Activated naive CD4-positive, alpha-beta T cell treated with anti-CD3 and anti-CD28 coated beads, Interleukin-2, amount 10 ng/mL, durations not matched to agents 7 days and 5 days (primary cell): ENCODE measurements at regions of chr18 and their contacts with region 1.

Region 1: DNA sequence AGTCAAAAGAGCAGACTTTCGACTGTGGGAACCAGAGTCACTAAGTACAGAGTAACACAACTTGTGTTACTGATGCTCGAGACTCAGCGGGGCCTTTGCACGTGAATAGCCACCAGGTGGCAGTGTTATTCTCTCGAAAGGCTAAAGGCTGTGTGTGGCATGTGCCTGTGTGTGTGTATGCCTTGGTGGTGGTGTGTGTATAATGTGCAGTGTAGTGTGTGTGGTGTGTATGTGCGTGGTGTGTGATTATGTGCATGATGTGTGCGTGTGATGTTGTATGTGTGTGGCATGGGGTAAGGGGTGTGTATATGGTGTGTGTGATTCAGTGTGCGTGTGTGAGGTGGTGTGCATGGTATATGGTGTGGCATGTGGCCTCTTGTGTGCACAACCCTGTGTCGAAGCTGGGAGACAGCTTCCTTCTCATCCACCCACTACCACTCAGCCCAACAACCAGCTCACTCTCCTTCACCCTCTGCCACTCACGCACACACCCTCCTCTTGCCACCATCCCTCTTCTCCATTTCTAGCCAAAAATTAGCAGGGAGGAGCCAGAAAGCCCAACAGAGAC is 83.0 kb upstream of the ZNF532 start:
- DNase-seq: peak; percentile 79
- H3K4me3 Mint-ChIP-seq: no peak overlapping the region
- H3K27ac Mint-ChIP-seq: no peak overlapping the region
- H3K4me1 Mint-ChIP-seq: no peaks in the 10 kb centered on the region
- H3K27me3 Mint-ChIP-seq: peaks cover 61% of the 10 kb centered on the region

Region 2: GRCh38 chr18:58624011-58624410 is 157.7 kb before region 1 on chr18:
- CTCF ChIA-PET with region 1: no interaction called
- DNase-seq: no peak
- H3K4me3 Mint-ChIP-seq: no peak overlapping the region
- H3K27ac Mint-ChIP-seq: no peak overlapping the region
- H3K4me1 Mint-ChIP-seq: peaks cover 8% of the 10 kb centered on the region
- H3K27me3 Mint-ChIP-seq: peaks cover 20% of the 10 kb centered on the region

Region 3: DNA sequence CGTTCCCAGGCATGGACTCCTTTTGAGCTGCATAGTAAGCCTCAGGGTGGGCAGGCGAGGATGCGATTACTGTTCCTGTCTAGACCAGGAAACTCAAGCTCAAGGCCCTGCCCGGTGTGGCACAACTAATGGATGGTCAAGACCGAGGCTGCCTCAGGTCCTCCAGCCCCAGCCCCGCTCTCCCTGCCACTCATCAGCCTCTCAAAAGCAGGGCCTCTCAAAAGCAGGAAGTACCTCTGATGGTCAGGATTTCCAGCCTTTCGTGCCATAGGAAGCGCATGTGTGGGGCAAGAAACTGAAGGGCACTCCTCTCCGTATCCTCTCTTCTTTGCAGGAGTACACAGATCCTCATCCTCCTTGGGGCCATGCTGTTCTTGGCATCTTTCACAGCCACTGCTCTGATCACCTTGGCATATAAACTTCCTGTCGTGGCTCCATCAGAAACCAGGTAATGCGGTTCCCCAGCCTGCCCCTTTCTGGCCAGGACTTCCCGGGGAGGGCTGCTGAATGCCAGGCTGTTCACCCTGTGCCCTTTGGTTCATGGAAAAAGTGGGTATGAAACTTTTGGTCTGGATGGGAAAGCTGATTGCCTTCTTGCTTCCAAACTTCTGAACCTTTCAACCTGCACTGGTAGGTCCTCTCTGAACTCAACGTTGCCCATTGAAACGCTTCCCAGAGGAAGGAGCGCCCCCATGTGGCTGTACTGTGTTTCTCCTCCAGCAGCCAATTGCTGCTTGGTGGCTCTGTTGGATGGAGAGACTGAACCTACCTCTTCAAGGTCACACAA is 275.2 kb after region 1 on chr18:
- CTCF ChIA-PET with region 1: interaction called, 31 read pairs
- DNase-seq: peak; percentile 78
- H3K4me3 Mint-ChIP-seq: no peak overlapping the region
- H3K27ac Mint-ChIP-seq: no peak overlapping the region
- H3K4me1 Mint-ChIP-seq: no peaks in the 10 kb centered on the region
- H3K27me3 Mint-ChIP-seq: peaks cover 19% of the 10 kb centered on the region

Region 4: DNA sequence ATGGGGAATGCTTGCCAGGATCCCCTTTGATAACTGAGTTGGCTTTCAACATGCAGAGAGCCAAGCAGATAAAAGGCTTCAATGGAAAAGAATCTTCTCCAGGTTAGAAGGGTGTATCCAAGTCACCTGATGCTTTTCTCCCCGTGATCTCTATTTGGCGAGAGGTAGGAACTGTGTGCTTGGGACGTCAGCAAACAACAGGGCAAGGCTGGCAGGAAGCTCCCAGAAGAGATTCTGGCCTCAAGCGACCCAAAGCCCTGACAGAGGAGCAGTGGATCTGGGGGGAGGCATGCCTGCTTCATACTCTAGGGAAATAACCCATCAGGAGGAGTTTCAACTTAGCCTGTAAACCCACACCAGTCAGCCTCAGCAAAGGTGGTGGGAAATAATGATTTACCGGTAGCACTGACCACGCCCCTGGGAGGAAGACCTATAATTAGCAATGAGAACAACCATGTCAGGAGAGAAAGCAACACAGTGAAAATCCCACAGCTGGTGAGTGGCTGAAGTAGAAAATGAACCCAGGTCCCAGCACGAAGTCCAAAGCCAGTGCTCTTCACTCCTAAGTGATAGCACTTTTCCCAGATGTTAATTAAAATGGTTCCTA is 281.7 kb after region 1 on chr18:
- CTCF ChIA-PET with region 1: interaction called, 51 read pairs
- DNase-seq: no peak
- H3K4me3 Mint-ChIP-seq: no peak overlapping the region
- H3K27ac Mint-ChIP-seq: no peak overlapping the region
- H3K4me1 Mint-ChIP-seq: peaks cover 2% of the 10 kb centered on the region
- H3K27me3 Mint-ChIP-seq: peaks cover 24% of the 10 kb centered on the region

Region 5: DNA sequence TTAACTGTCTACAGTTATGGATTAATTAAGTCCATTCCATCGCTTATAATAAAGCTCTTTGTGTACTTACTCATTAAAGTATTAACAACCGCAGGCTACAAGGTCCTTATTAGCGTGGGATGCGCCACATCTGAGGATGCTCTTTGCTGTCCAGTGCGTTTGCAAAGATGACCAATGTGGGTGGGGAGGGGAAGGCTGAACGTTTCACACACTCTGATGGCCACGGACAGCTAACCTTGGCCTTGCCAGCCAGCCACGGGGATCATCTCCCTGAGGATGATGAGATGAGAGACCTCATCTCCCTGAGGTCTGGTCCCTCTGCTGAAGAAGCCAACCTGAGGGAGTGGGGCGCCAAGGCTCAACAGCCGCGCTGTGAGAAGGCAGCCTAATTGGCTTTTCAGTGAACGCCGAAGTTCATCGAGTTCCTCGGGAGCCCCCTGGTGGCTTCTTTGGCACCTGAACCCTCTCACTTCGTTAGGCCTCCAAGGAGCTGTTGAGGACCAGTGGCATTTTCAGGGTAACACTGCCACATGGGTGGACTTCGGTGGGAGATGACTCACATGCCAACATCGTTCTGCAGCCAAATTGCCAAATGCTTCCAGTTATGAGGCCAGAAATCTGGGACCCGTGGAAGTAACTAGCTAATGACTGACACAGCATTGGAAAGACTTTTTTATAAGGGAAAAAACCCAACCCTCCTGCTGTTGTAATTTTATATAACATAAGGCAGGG is 288.6 kb after region 1 on chr18:
- CTCF ChIA-PET with region 1: interaction called, 51 read pairs
- DNase-seq: peak; percentile 86
- H3K4me3 Mint-ChIP-seq: no peak overlapping the region
- H3K27ac Mint-ChIP-seq: no peak overlapping the region
- H3K4me1 Mint-ChIP-seq: no peaks in the 10 kb centered on the region
- H3K27me3 Mint-ChIP-seq: peaks cover 24% of the 10 kb centered on the region